ENCODE measurements at regions of chr6 and their contacts with region 1.

Region 1: DNA sequence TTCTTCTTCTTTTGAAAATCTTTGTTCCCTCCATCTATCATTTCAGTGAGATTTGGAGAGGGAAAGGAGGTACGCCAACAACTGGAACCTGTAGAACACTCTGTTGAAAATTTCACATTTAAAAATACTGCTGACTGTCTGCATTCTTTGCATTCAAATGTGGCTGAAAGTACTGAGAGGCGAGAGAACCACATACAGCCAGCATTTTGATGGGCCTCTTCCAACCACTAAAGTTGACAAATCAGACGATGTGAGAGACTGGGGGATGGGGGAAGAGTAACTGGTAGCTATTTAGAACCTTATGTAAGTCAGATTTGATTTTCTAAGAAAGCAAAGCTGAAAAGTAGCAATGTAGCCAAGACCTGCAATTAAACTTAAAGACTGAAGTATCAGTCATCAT is 77.5 kb downstream of the FKBP5 start:
- DNase-seq: no peak
- ATAC-seq: no peak
- H3K4me3 ChIP-seq: no peak overlapping the region
- H3K27ac ChIP-seq: no peak overlapping the region
- H3K4me1 ChIP-seq: no peaks in the 10 kb centered on the region; the same call in 1 of the 2 replicates
- H3K27me3 ChIP-seq: no peaks in the 10 kb centered on the region
- CTCF ChIP-seq: no peak

Region 2: DNA sequence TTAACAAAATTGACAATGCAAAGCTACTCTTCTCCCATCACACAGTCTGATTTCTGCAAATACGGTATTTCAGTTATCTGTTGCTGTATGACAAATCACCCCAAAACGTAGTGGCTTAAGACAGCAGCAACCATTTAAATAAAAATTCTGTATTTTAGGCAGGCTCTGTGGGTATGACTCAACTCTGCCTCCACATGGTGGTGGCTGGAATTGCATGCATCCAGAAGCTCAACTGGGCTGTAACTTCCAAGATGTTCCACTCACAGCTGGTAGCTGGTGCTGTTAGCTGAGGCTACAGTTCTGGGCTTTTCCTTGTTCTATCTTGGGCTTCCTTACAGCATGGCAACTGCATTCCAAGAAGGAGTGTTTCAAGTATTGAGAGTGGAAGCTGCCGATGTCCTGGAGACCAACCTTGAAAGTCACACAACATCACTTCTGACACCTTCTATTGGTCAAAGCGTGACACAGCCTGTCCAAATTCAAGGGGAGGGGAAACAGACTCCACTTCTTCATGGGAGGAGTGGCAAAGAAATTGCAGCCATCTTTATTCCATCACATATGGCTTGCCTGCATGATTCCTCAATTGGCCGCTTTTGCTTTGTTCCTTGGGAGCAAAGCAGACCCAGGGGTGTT is 58.8 kb before region 1 on chr6:
- CTCF ChIA-PET with region 1: no interaction called
- POLR2A ChIA-PET with region 1: no interaction called
- intact Hi-C with region 1: no loop called
- DNase-seq: peak; percentile 80
- ATAC-seq: peak; percentile 40; the same call in 1 of the 2 replicates
- H3K4me3 ChIP-seq: no peak overlapping the region
- H3K27ac ChIP-seq: no peak overlapping the region
- H3K4me1 ChIP-seq: no peaks in the 10 kb centered on the region
- H3K27me3 ChIP-seq: no peaks in the 10 kb centered on the region
- CTCF ChIP-seq: peak; percentile 94

Region 3: DNA sequence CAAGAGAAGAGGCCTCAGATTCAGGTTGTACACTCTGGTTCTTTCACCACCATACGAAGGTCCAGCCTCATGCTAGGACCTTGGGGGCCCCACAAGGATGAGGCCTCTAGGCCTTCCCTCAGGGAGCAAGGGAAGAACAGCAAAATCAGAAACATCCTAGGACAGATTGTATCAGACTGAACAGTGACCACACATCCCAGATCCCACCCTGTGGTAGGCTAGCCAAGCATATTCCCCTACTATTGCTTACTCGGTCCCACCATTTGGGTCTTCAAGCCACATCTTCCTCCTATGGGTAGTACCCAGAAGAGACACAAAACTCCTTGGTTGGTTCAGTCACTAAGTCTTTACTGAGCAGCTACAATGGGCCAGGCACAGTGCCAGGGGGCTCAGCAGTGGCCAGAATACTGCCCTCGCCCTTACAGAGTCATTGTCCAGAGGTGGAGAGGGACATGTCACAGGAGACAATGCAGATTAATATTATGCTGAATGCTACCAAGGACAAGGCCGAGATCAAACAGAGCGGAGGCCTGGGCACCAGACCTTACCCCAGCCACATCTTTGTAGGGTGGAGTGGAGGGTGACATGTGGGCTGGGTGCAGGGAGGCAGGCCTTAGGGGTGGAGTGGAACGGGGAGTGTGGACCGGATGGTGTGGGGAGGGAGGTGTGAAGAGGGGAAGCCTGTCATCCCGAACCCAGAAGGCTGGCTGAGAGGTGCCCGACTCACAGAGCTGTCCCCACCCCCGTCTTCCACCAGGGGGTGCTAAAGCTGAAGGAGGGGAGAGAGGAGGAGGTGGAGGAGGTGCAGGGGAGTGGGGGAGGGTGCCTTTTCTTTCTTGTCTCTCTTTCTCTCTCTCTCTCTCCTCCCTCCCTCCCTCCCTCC is 512.3 kb after region 1 on chr6:
- CTCF ChIA-PET with region 1: interaction called, 14 read pairs
- POLR2A ChIA-PET with region 1: no interaction called
- intact Hi-C with region 1: no loop called
- DNase-seq: peak; percentile 91
- ATAC-seq: peak; percentile 54
- H3K4me3 ChIP-seq: no peak overlapping the region
- H3K27ac ChIP-seq: no peak overlapping the region
- H3K4me1 ChIP-seq: peaks cover 37% of the 10 kb centered on the region
- H3K27me3 ChIP-seq: no peaks in the 10 kb centered on the region
- CTCF ChIP-seq: peak; percentile 68

Measured in PC-3 (cell line).